Sigmoid colon (tissue), 7 donors: ENCODE measurements at regions of chr16 and their contacts with region 1.

Region 1: GRCh38 chr16:10743610-10744393 is at the start of gene NUBP1:
- DNase-seq: peak; percentile 100
- H3K4me3 ChIP-seq: peak within 1 kb of the TSS; percentile 49 to 67 (median 60)
- H3K27ac ChIP-seq: peak within 1 kb of the TSS; percentile 94 to 97 (median 96)
- H3K4me1 ChIP-seq: peaks cover 0 to 46% (median 39%) of the 10 kb centered on the region in 4 donors
- H3K27me3 ChIP-seq: no peaks in the 10 kb centered on the region
- CTCF ChIP-seq: no peak
- EP300 ChIP-seq: no peak
- POLR2A ChIP-seq: peak; percentile 39 to 59
- total RNA-seq, gene NUBP1: 26.3 to 32.9 (median 31.4) TPM

Region 2: GRCh38 chr16:9090960-9091866 is 1652.6 kb before region 1 on chr16 and contains the start of gene HAPSTR1:
- intact Hi-C with region 1: loop called (anchors 10 kb)
- DNase-seq: peak; percentile 100
- H3K4me3 ChIP-seq: peak within 1 kb of the TSS; percentile 70 to 90 (median 85)
- H3K27ac ChIP-seq: peak within 1 kb of the TSS; percentile 97 to 99 (median 99)
- H3K4me1 ChIP-seq: peaks cover 0 to 47% (median 42%) of the 10 kb centered on the region in 4 donors
- H3K27me3 ChIP-seq: no peaks in the 10 kb centered on the region
- CTCF ChIP-seq: no peak
- EP300 ChIP-seq: no peak
- POLR2A ChIP-seq: peak; percentile 81 to 89
- total RNA-seq, gene HAPSTR1: 43.8 to 47.6 (median 46.2) TPM

Region 3: DNA sequence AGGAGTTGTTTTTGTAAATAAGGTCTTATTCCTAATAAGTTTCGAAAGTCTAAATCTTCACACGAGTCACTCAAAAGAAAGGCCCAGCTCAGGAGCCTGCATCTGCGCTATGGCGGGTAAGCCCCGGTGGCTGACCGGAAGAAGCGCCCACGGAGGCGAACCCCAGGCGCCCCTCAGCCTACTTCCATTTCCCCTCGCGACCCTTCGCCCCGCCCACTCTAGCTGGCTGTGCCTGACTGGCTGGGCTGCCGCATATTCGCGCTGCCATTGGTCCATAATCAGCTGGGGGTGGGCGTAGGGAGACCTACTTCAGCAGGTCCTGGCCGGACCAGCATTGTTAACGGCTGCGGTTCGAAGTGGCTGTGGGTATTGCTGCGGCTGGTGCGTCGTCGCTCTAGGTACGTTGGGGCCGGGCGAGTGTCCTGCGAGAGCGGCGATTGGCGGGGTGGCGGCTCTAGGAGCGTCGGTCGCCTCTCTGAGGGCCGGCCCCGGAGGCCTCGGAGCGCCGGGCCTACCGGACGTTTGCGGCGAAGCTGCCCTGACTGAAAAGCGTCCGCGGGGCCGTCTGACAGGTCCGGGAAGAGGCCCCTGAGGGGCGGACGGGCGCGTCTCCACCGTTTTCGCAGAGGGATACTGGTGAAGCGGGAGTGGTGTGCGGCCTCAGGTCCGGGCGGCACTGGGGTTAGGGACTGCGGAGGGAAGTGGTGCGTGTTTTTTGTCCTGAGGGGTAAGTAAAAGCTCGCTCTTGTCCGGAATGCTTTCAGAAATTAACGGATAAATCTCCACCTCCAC is 357.9 kb before region 1 on chr16 and contains the start of gene ATF7IP2:
- intact Hi-C with region 1: loop called (anchors 10 kb)
- DNase-seq: peak; percentile 88
- H3K4me3 ChIP-seq: peak within 1 kb of the TSS; percentile 53 to 67 (median 60)
- H3K27ac ChIP-seq: peak within 1 kb of the TSS; percentile 67 to 81 (median 74)
- H3K4me1 ChIP-seq: peaks cover 0 to 14% (median 5%) of the 10 kb centered on the region in 4 donors
- H3K27me3 ChIP-seq: no peaks in the 10 kb centered on the region
- CTCF ChIP-seq: no peak
- EP300 ChIP-seq: no peak
- POLR2A ChIP-seq: peak; percentile 19 to 34
- total RNA-seq, gene ATF7IP2: 9.3 to 22.0 (median 14.3) TPM

Region 4: DNA sequence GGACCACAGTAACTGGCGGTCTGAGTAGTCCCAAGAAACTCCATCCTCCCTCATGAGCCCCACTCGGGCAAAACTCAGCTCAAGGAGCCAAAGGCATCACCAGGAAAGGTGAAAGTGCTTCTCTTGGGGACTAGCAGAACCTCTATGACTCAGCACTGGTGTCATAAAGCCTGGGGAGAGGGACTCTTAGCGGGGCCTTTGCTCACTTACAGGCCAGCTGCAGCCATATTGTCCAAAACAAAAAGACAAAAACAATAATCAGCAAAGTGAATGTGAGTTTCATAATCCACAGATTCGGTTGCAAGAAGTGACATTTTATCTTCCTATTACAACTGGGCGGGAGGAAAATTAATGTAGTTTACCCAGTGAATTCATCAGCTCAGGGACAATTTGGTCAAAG is 49.0 kb before region 1 on chr16 and contains the start of gene TEKT5:
- intact Hi-C with region 1: no loop called
- DNase-seq: no peak
- H3K4me3 ChIP-seq: no peak within 1 kb of the TSS
- H3K27ac ChIP-seq: no peak within 1 kb of the TSS
- H3K4me1 ChIP-seq: no peaks in the 10 kb centered on the region
- H3K27me3 ChIP-seq: no peaks in the 10 kb centered on the region
- CTCF ChIP-seq: no peak
- EP300 ChIP-seq: no peak
- POLR2A ChIP-seq: no peak
- total RNA-seq, gene TEKT5: 0.83 to 2.1 TPM in 2 of 4 donors, not detected in the others

Region 5: DNA sequence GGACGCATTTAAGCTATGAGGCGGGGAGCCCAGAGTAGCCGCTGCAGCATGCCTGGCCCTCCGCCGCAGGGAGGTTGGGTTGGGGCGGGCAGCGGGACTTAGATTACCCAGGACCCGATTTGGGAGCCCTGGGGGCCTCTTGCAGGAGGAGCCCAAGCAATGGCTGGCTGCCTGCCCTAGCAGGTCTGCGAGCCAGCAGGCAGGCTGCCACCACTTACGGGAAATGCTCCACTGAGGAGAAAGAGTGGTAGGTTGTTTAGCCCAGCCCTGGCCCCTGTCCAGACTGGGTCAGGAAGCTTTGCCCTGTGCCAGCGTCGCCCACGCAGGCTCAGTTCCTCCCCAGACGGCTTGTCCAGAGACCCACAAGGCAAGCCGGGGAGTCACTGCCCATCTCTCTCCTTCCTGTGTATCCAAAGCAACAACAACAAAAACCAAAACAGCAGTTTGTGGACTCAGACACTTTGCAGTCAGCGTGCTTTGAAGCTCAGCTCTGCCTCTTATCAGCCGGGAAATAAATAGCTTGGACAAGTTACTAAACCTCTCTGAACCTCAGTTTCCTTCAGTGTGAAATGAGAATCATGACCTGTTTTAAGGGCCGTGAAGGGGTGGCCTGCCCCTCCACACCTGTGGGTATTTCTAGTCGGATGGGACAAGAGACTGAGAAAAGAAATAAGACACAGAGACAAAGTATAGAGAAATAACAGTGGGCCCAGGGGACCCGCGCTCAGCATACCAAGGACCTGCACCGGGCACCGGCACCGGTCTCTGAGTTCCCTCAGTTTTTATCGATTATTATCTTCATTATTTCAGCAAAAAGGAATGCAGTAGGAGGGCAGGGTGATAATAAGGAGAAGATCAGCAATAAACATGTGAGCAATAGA is 85.3 kb after region 1 on chr16:
- intact Hi-C with region 1: loop called (anchors 2 kb)
- DNase-seq: peak; percentile 96
- H3K4me3 ChIP-seq: peak overlapping the region in 3 of 4 donors; percentile 12 to 18 (median 16)
- H3K27ac ChIP-seq: peak overlapping the region; percentile 80 to 92 (median 92)
- H3K4me1 ChIP-seq: peaks cover 3 to 32% (median 30%) of the 10 kb centered on the region in 4 donors
- H3K27me3 ChIP-seq: no peaks in the 10 kb centered on the region
- CTCF ChIP-seq: no peak
- EP300 ChIP-seq: peak in 2 of 4 donors; percentile 60 to 76
- POLR2A ChIP-seq: no peak

Region 6: DNA sequence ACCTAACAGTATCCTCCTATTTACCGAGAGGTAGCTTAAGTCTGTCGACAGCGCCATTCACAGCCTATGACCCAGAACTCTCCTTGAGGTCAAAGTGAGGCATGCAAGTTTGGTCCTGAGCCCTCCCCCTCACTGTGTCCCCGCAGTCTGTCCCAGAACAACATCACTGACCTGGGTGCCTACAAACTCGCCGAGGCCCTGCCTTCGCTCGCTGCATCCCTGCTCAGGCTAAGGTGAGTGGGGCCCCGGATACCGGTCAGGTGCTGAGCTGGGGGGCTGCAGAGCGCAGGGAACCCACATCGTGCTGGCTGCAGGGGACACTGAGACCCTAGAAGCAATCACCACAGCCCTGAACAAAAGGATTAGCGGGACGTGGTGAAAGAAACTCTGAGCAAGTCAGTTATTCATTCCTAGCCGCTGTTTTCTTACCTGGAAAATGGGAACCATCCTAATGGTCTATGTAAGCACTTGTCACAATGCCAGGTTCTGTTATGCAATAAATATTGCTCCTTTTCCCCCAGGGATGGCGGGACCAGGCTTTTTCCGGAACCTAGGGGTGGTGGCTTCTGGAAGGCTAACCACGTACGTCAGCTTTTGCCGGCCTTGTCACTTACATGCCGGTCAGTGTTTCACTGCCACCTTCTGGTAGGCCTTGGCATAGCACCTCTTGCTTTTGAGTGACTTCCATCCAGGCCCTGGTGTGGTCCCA is 174.6 kb after region 1 on chr16:
- intact Hi-C with region 1: loop called (anchors 2 kb)
- DNase-seq: peak; percentile 97
- H3K4me3 ChIP-seq: peak overlapping the region in 1 of 4 donors; percentile 26
- H3K27ac ChIP-seq: peak overlapping the region; percentile 3 to 44 (median 22)
- H3K4me1 ChIP-seq: peaks cover 0 to 39% (median 28%) of the 10 kb centered on the region in 4 donors
- H3K27me3 ChIP-seq: no peaks in the 10 kb centered on the region
- CTCF ChIP-seq: peak; percentile 81 to 96 (median 95)
- EP300 ChIP-seq: no peak
- POLR2A ChIP-seq: no peak

Region 7: DNA sequence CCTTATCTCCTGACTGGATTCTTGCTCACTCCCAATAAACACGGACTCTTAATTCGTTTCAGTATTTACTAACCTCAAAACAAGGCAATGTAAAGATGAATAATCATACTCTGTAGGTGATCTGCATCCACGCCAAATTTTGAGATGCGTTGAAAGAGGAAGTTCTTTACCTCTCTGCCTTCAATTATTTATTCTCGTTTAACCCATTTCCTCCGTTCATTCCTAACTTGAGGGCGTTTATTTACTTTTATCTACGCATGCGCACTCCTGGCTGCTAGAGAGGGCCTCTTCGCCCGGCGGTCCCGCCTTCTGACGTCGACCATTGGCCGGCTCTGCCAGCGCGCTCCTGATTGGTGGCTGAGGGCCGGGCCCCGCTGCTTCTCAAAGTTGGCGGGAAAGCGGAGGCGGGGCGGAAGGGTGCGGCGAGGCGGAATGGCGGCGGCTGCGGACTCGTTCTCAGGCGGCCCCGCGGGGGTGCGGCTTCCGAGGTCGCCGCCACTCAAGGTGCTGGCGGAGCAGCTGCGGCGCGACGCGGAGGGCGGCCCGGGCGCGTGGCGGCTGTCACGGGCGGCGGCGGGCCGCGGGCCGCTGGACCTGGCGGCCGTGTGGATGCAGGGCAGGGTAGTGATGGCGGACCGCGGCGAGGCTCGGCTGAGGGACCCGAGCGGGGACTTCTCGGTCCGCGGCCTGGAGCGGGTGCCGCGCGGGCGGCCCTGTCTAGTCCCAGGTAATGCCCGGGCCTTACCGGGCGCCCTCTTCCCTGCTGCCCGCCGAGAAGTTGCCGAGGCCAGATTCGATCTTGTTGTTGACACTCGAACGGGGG is 601.4 kb after region 1 on chr16 and contains the start of gene RMI2:
- intact Hi-C with region 1: loop called (anchors 10 kb)
- DNase-seq: peak; percentile 98
- H3K4me3 ChIP-seq: peak within 1 kb of the TSS; percentile 31 to 65 (median 58)
- H3K27ac ChIP-seq: peak within 1 kb of the TSS in 2 of 4 donors; percentile 39 to 50
- H3K4me1 ChIP-seq: peaks cover 0 to 30% (median 24%) of the 10 kb centered on the region in 4 donors
- H3K27me3 ChIP-seq: no peaks in the 10 kb centered on the region
- CTCF ChIP-seq: no peak
- EP300 ChIP-seq: no peak
- POLR2A ChIP-seq: no peak
- total RNA-seq, gene RMI2: 0.36 to 2.2 (median 1.2) TPM